ENCODE measurements at regions of chr1 and their contacts with region 1.

Region 1: DNA sequence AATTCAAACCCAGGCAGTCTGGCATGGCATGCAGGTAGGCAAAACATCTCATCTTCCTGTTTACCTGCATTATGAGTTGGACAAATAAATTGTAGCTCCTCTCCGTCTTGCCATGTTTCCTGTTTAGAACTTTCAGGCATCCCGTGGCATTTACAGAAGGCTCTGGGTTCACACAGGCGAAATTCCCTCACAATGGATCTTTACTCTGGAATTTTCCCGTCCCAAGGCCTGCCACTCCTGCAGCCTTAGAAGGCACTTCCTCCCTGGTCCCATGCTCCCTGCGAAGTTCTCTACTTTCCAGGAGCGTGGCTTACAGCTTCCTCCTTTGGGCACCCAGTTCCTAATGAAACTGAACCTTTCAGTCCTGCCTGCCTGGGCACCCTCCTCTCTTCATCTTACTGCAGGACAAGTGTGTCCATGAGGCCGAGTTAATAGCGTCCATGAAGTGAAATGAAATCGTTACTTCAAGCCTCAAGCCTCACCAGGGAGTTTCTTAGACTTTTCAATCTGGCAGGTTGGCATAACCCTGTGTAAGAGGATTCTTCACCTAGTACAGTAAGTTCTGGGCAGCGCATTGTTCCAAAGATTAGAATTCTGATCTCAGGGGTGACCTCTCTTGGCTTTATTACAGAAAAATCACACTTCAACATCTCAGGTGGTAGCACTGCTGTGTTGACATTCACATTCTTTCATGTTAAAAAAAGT is 36.8 kb upstream of the AHCYL1 start:
- DNase-seq: no peak
- H3K4me3 ChIP-seq: no peak overlapping the region
- CTCF ChIP-seq: no peak

Region 2: GRCh38 chr1:109556563-109556962 is 391.2 kb before region 1 on chr1:
- CTCF ChIA-PET with region 1: no interaction called
- POLR2A ChIA-PET with region 1: no interaction called
- DNase-seq: no peak
- H3K4me3 ChIP-seq: no peak overlapping the region
- CTCF ChIP-seq: no peak

Region 3: GRCh38 chr1:109959974-109960744 is 12.4 kb after region 1 on chr1:
- CTCF ChIA-PET with region 1: interaction called, 14 read pairs
- POLR2A ChIA-PET with region 1: no interaction called
- DNase-seq: peak; percentile 46
- H3K4me3 ChIP-seq: no peak overlapping the region
- CTCF ChIP-seq: no peak

Region 4: DNA sequence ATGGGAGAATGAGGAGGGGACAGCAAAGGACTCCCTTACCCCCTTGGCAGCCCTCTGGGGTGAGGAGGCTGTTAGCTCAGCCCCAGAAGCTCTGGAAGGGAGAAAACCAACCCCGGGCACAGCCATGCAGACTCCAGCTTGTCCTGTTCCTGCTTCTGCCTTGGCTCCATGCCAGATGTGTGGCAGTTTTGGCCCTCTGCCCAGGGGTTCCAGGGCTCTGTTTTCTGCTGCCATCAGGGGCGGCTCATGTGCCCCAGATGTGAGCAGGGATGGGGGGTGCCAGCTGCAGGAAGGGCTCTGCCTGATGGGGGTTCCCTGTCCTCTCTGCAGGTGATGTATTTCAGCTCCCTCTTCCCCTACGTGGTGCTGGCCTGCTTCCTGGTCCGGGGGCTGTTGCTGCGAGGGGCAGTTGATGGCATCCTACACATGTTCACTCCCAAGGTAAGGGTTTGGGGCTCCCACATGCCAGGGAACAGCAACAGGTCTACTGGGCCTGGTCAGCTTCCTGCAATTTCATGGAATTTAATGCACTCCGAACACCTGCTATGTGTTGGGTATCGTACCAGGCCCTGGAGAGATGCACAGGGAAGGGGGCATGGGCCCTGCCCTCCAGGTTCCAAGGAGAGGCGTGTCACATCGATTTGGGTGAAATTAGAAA is 228.7 kb after region 1 on chr1:
- CTCF ChIA-PET with region 1: no interaction called
- POLR2A ChIA-PET with region 1: no interaction called
- DNase-seq: no peak
- H3K4me3 ChIP-seq: no peak overlapping the region
- CTCF ChIP-seq: no peak